Heart right ventricle (tissue), 16 donors: ENCODE measurements at regions of chr11 and their contacts with region 1.

Region 1: DNA sequence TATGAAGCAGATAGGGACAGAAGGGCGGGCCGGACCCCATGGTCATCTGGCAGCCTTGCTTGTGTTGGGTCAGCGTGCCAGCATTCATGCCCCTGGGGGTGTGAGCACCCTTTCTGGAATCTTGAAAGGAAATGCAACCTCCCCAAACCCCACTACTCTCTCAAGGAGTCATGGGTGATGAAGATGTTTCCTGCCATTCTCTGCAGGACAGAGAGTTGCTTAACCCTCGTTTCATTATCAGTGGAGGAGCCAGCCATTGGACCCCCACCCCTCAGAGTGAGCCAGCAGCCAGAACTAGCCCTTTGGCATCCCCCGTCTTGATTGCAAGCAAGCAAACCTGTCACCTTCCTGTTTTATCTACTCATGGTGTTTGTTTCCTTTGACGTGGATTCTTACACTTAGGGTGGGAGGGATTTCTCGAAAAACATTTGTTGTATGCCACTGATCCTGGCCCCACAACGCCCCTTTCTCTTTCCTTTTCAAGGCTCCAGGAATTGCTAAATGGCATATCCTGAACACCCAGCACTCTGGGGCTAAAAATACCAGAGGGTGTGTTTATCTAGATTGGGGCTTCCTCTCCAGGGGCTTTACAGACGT is 258.3 kb downstream of the ETS1 start:
- DNase-seq: peak; percentile 41 to 64
- ATAC-seq: peak; percentile 65 to 92 (median 88)
- H3K4me3 ChIP-seq: no peak overlapping the region
- H3K27ac ChIP-seq: peak overlapping the region; percentile 3 to 91 (median 70)
- H3K4me1 ChIP-seq: peaks cover 0 to 53% (median 34%) of the 10 kb centered on the region in 9 donors
- H3K27me3 ChIP-seq: no peaks in the 10 kb centered on the region
- CTCF ChIP-seq: no peak

Region 2: GRCh38 chr11:128246364-128246801 is 82.7 kb before region 1 on chr11:
- intact Hi-C with region 1: no loop called
- DNase-seq: no peak
- ATAC-seq: peak in 5 of 8 donors; percentile 24 to 79 (median 57)
- H3K4me3 ChIP-seq: no peak overlapping the region
- H3K27ac ChIP-seq: no peak overlapping the region
- H3K4me1 ChIP-seq: peaks cover 0 to 9% (median 0%) of the 10 kb centered on the region in 9 donors
- H3K27me3 ChIP-seq: no peaks in the 10 kb centered on the region
- CTCF ChIP-seq: no peak

Region 3: DNA sequence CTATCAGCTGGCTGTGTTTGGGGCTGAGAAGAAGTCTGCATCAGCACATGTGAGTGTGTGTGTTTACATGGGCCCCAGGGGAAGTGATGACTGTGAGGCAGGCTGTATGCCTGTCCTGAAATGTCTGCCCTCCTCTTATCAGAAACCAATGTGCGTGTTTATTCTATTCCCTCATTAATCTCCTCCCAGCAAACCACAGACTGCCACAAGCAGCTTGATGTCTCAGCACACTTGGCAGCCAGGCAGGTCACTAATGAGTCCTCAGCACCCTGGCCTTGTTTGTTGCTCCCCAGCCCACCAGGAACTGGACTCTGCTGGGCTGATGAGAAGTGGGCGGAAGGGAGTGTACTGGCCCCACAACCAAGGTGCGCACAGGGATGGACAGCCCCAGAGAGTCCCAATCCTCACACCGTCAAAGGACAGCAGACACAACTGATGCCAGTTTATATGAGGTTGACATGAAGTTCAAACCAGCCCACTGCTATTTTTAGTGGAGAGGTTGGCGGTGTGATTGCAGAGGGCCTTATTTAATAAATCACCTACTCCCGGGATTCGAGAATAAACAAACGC is 32.5 kb after region 1 on chr11:
- intact Hi-C with region 1: loop called in 1 of 10 experiments (anchors 2 kb)
- DNase-seq: no peak
- ATAC-seq: peak in 4 of 8 donors; percentile 19 to 53 (median 26)
- H3K4me3 ChIP-seq: no peak overlapping the region
- H3K27ac ChIP-seq: no peak overlapping the region
- H3K4me1 ChIP-seq: peaks cover 0 to 25% (median 4%) of the 10 kb centered on the region in 9 donors
- H3K27me3 ChIP-seq: no peaks in the 10 kb centered on the region
- CTCF ChIP-seq: no peak